H1 (cell line): ENCODE measurements at regions of chr12 and their contacts with region 1.

Region 1: DNA sequence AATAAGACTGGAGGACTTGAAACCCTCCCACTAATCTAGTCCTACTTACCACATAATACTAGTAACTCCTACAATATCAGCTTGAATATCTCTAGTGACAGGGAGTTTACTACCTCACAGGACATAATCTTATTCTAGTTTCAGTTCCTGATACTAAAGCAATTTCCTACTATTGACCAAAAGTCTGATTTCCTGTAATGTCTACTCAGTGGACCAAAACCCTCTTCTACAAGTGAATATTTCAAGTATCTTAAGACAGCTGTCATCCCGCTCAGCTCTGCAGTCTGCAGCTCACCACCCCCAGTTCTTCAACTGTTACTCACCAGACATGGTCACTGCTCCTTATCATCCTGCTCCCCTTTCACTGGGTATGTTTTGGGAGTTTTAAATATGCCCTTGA is 70.8 kb upstream of the TMCC3 start:
- DNase-seq: no peak
- H3K4me3 ChIP-seq: no peak overlapping the region
- H3K27ac ChIP-seq: no peak overlapping the region
- H3K4me1 ChIP-seq: peaks cover 3 to 9% (median 4%) of the 10 kb centered on the region in 4 experiments; a peak in 5 of 7 replicates
- H3K27me3 ChIP-seq: no peaks in the 10 kb centered on the region
- CTCF ChIP-seq: no peak
- EP300 ChIP-seq: no peak
- POLR2A ChIP-seq: no peak
- RAD21 ChIP-seq: no peak

Region 2: DNA sequence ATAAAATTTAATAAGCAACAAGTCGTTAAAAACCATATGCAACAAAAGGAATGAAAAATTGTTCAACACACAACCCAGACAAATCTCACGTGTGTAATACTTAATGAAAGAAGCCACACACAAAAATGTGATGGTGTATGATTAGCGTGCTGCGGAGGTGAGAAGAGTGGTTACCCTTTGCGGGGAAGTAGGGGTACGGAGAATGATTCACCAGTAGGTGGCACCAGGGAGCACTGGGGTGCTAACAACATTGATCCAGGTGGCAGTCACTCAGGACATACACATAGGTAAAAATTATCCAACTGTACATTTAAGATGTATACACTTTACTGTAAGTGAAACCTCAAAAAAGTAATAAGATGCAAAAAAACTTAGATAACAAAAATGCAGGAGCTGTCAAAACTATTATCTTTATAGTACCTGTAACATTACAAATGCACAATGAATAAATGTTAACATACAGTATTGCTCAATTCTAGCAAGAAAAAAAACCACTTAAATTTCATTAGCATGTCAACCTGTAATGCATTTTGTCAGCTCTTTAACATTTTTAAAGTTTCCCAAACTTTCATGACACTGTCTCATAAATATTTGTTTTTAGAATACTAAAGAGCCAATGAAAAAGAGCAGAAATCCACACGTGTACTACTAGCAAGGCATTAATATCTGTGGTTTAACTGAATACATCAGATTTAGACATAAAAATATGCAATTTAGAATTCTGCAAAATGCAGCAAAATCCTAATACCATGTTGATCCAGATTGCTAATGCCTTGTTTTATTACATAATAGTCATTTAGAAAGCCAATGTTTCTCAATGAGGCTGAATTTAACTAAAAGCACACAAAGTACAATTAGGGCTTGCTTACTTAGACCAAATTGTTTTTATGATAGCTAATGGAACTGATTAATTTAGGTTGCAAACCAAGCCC is 117.5 kb before region 1 on chr12:
- CTCF ChIA-PET with region 1: no interaction called
- POLR2A ChIA-PET with region 1: no interaction called
- DNase-seq: peak in 1 of 2 experiments; percentile 81
- H3K4me3 ChIP-seq: no peak overlapping the region
- H3K27ac ChIP-seq: no peak overlapping the region
- H3K4me1 ChIP-seq: no peaks in the 10 kb centered on the region
- H3K27me3 ChIP-seq: no peaks in the 10 kb centered on the region
- CTCF ChIP-seq: peak; percentile 73 to 87 (median 85)
- EP300 ChIP-seq: no peak
- POLR2A ChIP-seq: no peak
- RAD21 ChIP-seq: peak; percentile 68 to 70

Region 3: GRCh38 chr12:94621664-94622359 is 99.4 kb before region 1 on chr12:
- CTCF ChIA-PET with region 1: no interaction called
- POLR2A ChIA-PET with region 1: no interaction called
- DNase-seq: no peak
- H3K4me3 ChIP-seq: no peak overlapping the region
- H3K27ac ChIP-seq: no peak overlapping the region
- H3K4me1 ChIP-seq: no peaks in the 10 kb centered on the region
- H3K27me3 ChIP-seq: no peaks in the 10 kb centered on the region
- CTCF ChIP-seq: no peak
- EP300 ChIP-seq: no peak
- POLR2A ChIP-seq: no peak
- RAD21 ChIP-seq: no peak

Region 4: GRCh38 chr12:94704452-94705306 is 16.5 kb before region 1 on chr12:
- CTCF ChIA-PET with region 1: interaction called, 23 read pairs
- POLR2A ChIA-PET with region 1: interaction called, 3 read pairs
- DNase-seq: no peak
- H3K4me3 ChIP-seq: no peak overlapping the region
- H3K27ac ChIP-seq: no peak overlapping the region
- H3K4me1 ChIP-seq: no peaks in the 10 kb centered on the region
- H3K27me3 ChIP-seq: no peaks in the 10 kb centered on the region
- CTCF ChIP-seq: no peak
- EP300 ChIP-seq: no peak
- POLR2A ChIP-seq: no peak
- RAD21 ChIP-seq: no peak

Region 5: DNA sequence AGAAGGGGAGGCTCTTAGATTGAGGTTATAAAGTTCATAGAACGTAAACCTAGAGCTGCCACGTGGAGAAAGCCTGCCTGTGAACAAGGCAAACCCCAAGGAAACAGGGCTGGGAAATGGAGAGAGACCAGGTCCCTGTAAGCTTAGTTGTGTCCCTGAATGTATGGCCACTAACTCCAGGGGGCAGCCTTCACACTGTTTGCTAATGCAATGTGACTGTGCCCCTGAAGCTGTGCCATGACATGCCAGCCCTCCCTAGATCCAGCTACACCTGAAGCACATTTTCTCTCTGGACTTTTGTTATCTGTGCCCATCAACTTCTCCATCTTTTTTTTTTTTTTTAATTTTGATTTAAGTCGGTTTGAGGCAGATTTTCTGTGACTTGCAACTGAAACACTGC is 10.2 kb before region 1 on chr12:
- CTCF ChIA-PET with region 1: interaction called, 23 read pairs
- POLR2A ChIA-PET with region 1: interaction called, 3 read pairs
- DNase-seq: no peak
- H3K4me3 ChIP-seq: no peak overlapping the region
- H3K27ac ChIP-seq: no peak overlapping the region
- H3K4me1 ChIP-seq: 0 out of 7 replicates have a peak, but pooled peaks cover 0 to 2% (median 0%) of the 10 kb centered on the region in 4 experiments
- H3K27me3 ChIP-seq: no peaks in the 10 kb centered on the region
- CTCF ChIP-seq: peak; percentile 48 to 70 (median 63)
- EP300 ChIP-seq: no peak
- POLR2A ChIP-seq: no peak
- RAD21 ChIP-seq: peak; percentile 54 to 67